HepG2 (cell line): ENCODE measurements at regions of chr15 and their contacts with region 1.

Region 1: DNA sequence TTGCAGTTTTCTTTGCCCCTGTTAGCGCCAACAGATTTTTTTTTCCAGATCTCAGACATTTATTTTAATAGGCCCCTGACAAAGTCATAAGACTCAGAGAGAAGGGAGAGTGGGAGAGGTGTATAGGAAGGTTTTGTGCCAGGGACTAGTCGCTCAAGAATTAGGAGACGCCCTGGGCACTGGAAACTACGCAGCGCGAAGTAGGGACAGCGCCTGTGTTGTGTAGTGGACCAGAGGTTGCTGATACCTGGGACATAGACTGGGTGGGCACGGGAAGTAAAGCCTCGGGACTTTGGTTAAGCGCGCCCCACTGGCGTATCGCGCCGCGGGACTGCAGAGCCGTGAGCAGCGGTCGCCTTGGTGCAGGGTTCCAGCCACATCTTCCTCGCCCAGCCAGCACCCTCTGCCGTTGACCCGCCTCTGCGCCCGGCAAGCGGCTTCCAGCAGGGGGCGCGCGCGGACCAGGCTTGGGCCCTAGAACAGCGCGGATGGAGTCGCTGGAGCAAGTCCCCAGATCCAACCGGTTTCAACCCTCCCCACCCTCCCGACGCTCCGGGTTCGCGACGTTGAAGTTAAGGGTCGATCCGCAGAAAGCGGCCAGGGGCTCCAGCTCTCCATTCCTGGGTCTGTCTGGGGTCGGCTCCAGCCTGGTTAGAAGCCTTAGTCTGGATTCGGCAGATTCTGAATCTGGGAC is 3.0 kb upstream of the ISLR2 start:
- DNase-seq: peak; percentile 58
- ATAC-seq: peak; percentile 97
- H3K4me3 ChIP-seq: no peak overlapping the region
- H3K27ac ChIP-seq: no peak overlapping the region
- H3K4me1 ChIP-seq: no peaks in the 10 kb centered on the region
- H3K27me3 ChIP-seq: peaks cover 10 to 51% of the 10 kb centered on the region in 2 experiments; a peak in 4 of 5 replicates
- CTCF ChIP-seq: peak; percentile 99
- EP300 ChIP-seq: no peak
- POLR2A ChIP-seq: no peak
- RAD21 ChIP-seq: peak; percentile 92

Region 2: DNA sequence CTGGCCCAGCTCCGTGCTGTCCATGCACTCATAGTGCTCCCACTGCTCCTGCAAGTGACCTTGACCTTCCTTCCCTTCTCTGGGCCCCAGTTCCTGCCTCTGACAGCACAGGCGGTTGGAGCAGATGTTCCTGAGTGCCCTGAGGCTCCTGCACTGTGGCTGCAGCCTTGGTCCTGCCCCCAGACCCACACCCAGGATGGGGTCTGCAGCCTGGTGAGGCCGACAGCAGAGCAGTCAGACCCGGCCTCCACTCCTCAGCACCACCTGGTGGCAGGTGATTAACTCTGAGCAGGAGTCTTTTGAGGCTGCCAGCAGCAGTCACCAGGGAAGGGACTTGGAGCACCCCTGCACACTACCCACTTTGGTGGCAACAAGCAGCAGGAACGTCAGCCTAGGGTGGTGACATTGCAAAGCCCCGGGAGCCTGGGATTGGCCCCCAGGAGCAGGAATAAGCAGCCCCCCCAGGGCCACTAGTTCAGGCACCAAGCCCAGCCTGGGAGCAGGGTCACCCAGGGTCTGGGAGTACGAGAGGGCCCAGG is 175.5 kb after region 1 on chr15:
- CTCF ChIA-PET with region 1: interaction called, 19 read pairs
- POLR2A ChIA-PET with region 1: no interaction called
- in situ Hi-C with region 1: loop called (anchors 5 kb)
- intact Hi-C with region 1: loop called (anchors 1 kb)
- DNase-seq: peak; percentile 11
- ATAC-seq: peak; percentile 62
- H3K4me3 ChIP-seq: no peak overlapping the region
- H3K27ac ChIP-seq: no peak overlapping the region
- H3K4me1 ChIP-seq: 0 out of 2 replicates have a peak, but pooled peaks cover 4% of the 10 kb centered on the region
- H3K27me3 ChIP-seq: peaks cover 4 to 46% of the 10 kb centered on the region in 2 experiments; a peak in 3 of 5 replicates
- CTCF ChIP-seq: peak; percentile 71
- EP300 ChIP-seq: no peak
- POLR2A ChIP-seq: no peak
- RAD21 ChIP-seq: 0 out of 2 replicates have a peak, but pooled peaks have one; percentile 25

Region 3: DNA sequence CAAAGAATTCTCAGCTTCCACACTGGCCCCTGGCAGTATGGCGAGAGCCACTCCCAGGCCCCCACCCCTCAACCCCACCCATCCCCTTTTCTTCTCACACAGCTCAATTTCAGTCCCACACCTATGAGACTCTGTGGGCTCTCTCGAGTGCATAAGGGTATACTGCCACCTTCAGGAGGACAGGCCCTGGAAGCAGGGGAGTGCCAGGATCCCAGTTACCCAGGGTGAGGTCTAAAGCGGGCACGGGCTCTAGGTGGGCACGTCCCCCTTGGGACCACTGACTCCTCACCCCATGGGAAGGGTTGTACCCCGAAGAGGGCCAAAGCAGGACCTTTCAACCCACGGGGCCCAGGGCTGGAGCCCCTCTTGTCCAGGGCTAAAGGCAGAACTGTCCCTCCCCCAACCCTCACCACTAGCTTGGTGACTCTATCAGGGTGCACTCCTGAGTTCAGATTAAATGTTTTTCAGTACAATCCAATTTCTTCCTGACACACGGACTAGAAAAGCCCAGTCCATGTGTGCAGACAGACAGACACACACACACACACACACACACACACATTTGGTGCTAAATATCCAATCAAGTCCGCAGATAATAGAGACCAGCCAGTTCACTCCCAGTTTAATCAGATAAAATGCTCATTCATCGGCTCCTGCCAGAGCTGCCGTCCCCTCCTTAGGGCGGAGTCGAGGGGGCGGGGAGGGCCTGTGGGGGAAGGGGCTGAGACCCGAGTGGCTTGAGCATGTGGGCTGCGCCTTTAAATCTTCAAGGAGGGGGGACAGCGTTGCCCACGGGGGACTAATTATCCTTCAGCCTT is 180.6 kb after region 1 on chr15:
- CTCF ChIA-PET with region 1: interaction called, 19 read pairs
- POLR2A ChIA-PET with region 1: no interaction called
- in situ Hi-C with region 1: loop called (anchors 5 kb)
- intact Hi-C with region 1: loop called (anchors 1 kb)
- DNase-seq: peak; percentile 33
- ATAC-seq: peak; percentile 77
- H3K4me3 ChIP-seq: no peak overlapping the region
- H3K27ac ChIP-seq: no peak overlapping the region
- H3K4me1 ChIP-seq: no peaks in the 10 kb centered on the region
- H3K27me3 ChIP-seq: peaks cover 15 to 28% of the 10 kb centered on the region in 2 experiments; a peak in 4 of 5 replicates
- CTCF ChIP-seq: peak; percentile 74
- EP300 ChIP-seq: no peak
- POLR2A ChIP-seq: no peak
- RAD21 ChIP-seq: 0 out of 2 replicates have a peak, but pooled peaks have one; percentile 20

Region 4: GRCh38 chr15:74322181-74323076 is 195.0 kb after region 1 on chr15:
- CTCF ChIA-PET with region 1: interaction called, 8 read pairs
- POLR2A ChIA-PET with region 1: no interaction called
- in situ Hi-C with region 1: no loop called
- intact Hi-C with region 1: loop called (anchors 1 kb)
- DNase-seq: peak; percentile 41
- ATAC-seq: peak; percentile 92
- H3K4me3 ChIP-seq: no peak overlapping the region
- H3K27ac ChIP-seq: no peak overlapping the region
- H3K4me1 ChIP-seq: no peaks in the 10 kb centered on the region
- H3K27me3 ChIP-seq: peaks cover 3 to 4% of the 10 kb centered on the region in 2 experiments; a peak in 2 of 5 replicates
- CTCF ChIP-seq: peak; percentile 96
- EP300 ChIP-seq: no peak
- POLR2A ChIP-seq: no peak
- RAD21 ChIP-seq: peak; percentile 81